Esophagus muscularis mucosa (tissue), 4 donors: ENCODE measurements at regions of chr2 and their contacts with region 1.

Region 1: DNA sequence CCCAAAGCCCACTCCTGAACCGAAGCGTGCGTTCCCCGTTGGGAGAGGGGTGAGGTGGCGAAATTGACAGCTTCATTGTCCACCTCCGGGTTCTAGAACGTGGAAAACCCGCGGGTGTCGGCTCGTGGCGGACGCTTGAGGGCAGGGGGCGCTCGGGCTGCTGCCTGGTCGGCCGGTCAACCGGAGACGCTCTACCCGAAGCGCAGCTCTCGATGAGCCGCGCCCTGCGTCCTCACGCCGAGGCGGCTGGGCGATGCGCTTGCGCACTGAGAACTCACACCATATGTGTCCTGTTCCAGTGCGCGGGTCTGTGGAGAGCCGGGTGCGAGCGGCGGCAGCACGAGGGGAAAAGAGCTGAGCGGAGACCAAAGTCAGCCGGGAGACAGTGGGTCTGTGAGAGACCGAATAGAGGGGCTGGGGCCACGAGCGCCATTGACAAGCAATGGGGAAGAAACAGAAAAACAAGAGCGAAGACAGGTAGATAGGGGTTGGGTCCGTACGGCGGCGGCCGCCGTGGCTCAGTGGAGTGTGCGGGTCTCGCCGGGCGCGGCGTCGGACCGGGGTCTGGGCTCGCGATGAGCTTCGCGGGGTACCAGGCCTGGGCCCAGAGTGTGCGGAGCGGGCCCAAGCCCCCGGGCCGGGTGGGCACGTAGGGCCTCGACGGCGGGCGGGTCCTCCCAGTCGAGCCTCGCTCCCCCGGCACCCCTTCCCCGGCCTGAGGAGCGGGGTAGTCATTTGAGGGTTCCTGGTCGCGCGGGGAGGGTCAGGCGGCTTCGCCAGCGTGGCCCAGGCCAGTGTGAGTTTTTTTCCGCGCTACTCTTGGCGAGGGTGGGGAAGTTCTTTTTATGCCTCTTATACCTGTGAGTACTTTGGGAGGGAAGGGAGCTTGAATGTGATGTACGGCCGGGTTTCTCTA is at the start of gene EIF5B:
- DNase-seq: peak; percentile 98
- H3K4me3 ChIP-seq: peak within 1 kb of the TSS; percentile 68 to 94 (median 82)
- H3K27ac ChIP-seq: peak within 1 kb of the TSS; percentile 82 to 93 (median 90)
- H3K4me1 ChIP-seq: peaks cover 41 to 56% (median 53%) of the 10 kb centered on the region in 4 donors
- H3K27me3 ChIP-seq: no peaks in the 10 kb centered on the region
- CTCF ChIP-seq: peak; percentile 58 to 69 (median 67)
- EP300 ChIP-seq: no peak
- POLR2A ChIP-seq: no peak
- total RNA-seq, gene EIF5B: 39.6 to 60.2 (median 47.4) TPM

Region 2: GRCh38 chr2:98560256-98560771 is 777.1 kb before region 1 on chr2:
- intact Hi-C with region 1: no loop called
- DNase-seq: no peak
- H3K4me3 ChIP-seq: no peak overlapping the region
- H3K27ac ChIP-seq: peak overlapping the region; percentile 73 to 85 (median 78)
- H3K4me1 ChIP-seq: peaks cover 44 to 50% (median 47%) of the 10 kb centered on the region in 4 donors
- H3K27me3 ChIP-seq: no peaks in the 10 kb centered on the region
- CTCF ChIP-seq: no peak
- EP300 ChIP-seq: no peak
- POLR2A ChIP-seq: no peak

Region 3: DNA sequence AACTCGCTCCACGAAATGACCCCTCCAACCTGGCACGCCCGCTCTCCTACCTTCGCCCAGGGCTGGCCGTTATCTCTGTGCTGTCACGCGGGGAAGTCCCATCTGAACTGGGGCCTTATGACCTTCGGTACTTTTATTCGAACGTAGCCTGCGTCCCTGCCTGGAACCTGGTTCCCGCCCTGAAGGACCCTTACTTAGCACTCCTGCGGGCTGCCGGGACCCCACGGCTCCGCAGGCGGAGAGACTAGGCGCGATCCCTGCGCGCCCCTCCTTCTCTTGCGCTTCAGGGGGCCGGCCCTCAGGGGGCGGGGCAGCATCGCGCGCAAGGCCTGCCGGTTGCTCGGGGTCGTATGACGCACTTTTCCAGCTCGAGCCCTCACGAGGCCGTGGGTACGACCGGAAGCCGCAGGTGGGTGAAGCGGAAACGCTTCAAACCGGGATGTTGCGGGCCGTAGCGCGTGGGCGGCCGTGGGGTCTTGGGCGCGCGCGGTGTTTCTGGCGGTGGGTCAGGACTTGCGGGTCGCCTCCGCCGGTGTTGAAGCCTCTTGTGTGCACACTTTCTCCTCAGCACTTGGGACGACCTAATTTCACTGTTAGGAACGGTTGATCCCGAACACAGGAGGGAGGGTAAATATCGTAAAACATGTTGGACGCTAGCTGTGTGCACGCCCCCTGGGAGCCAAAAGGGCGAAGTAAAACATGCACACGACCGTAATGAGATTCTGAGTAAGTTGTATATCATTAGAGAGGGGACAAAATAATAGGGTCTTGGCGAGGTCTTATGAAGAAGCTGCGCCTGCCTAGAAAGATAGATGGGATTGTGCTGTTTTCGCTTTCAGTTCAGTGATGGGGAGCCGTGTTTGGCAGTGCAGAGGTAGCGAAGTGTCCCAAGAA is 182.5 kb before region 1 on chr2 and contains the starts of genes LIPT1 and TSGA10:
- intact Hi-C with region 1: loop called (anchors 10 kb)
- DNase-seq: peak; percentile 97
- H3K4me3 ChIP-seq: peak within 1 kb of the TSS; percentile 65 to 75 (median 70)
- H3K27ac ChIP-seq: peak within 1 kb of the TSS; percentile 83 to 90 (median 86)
- H3K4me1 ChIP-seq: peaks cover 10 to 23% (median 20%) of the 10 kb centered on the region in 4 donors
- H3K27me3 ChIP-seq: no peaks in the 10 kb centered on the region
- CTCF ChIP-seq: peak in 1 of 3 experiments; percentile 9
- EP300 ChIP-seq: peak; percentile 62
- POLR2A ChIP-seq: peak; percentile 85
- total RNA-seq, gene LIPT1: 4.2 to 6.4 (median 5.4) TPM
- total RNA-seq, gene TSGA10: 1.1 to 4.4 (median 2.0) TPM

Region 4: DNA sequence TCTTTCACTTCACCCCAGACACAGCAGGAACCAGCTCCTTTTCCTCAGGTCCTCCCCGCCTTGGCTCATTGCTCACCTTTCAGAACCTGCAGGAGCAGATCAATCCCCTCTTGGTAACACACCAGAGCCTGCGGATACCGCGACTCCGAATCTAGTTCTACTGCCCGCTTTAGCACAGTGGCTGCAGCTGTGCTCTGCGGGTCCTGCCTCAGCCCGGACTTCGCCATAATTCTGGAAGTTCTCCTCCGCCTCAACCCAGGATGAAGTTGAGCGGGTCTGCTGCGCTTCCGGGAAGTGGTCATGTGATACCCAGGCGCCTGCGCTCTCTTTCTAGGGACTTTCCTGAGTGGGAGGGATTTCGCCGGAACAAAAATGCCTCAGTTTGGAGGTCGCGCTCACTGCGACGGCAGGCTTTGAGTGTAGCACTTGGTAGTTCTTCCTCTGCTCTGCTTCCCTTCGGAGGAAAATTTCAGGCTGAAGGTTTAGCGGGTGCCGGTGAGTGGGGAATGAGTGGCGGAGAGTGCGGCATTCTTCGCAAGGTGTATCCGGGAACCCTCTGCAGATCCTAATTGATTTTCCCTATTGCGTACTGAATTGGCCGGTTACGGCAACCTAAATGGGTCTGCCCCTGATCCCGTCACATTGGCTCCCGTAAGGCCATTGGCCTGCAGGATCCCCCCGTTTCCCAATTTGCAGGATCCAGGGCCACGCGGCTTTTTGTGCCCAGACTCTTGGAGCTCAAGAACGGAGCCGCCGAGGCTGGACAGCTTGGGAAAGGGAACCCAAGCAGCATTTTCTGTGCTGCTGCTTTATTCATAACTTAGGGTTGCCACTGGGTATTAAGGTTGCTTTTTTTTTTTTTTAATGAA is 156.4 kb before region 1 on chr2 and contains the starts of genes MITD1 and MRPL30:
- intact Hi-C with region 1: loop called (anchors 5 kb)
- DNase-seq: peak; percentile 98
- H3K4me3 ChIP-seq: peak within 1 kb of the TSS; percentile 73 to 81 (median 74)
- H3K27ac ChIP-seq: peak within 1 kb of the TSS; percentile 72 to 81 (median 78)
- H3K4me1 ChIP-seq: peaks cover 29 to 48% (median 40%) of the 10 kb centered on the region in 4 donors
- H3K27me3 ChIP-seq: no peaks in the 10 kb centered on the region
- CTCF ChIP-seq: no peak
- EP300 ChIP-seq: no peak
- POLR2A ChIP-seq: peak; percentile 34
- total RNA-seq, gene MITD1: 15.6 to 17.3 (median 17.0) TPM
- total RNA-seq, gene MRPL30: 20.6 to 23.8 (median 21.6) TPM

Region 5: GRCh38 chr2:99489761-99490622 is 152.6 kb after region 1 on chr2 and contains the start of gene REV1:
- intact Hi-C with region 1: loop called (anchors 2 kb)
- DNase-seq: peak; percentile 96
- H3K4me3 ChIP-seq: peak within 1 kb of the TSS; percentile 88 to 97 (median 94)
- H3K27ac ChIP-seq: peak within 1 kb of the TSS; percentile 97 to 99 (median 99)
- H3K4me1 ChIP-seq: peaks cover 23 to 48% (median 33%) of the 10 kb centered on the region in 4 donors
- H3K27me3 ChIP-seq: no peaks in the 10 kb centered on the region
- CTCF ChIP-seq: peak; percentile 64 to 82 (median 67)
- EP300 ChIP-seq: no peak
- POLR2A ChIP-seq: peak; percentile 27
- total RNA-seq, gene REV1: 26.7 to 47.7 (median 31.4) TPM